CD8-positive, alpha-beta T cell (primary cell): ENCODE measurements at regions of chr20 and their contacts with region 1.

Region 1: GRCh38 chr20:47356526-47357295 is at the start of gene ZMYND8:
- DNase-seq: peak; percentile 90 to 100 (median 95)
- ATAC-seq: peak; percentile 90
- H3K4me3 ChIP-seq: peak within 1 kb of the TSS; percentile 53 to 55
- H3K4me3 Mint-ChIP-seq: peak within 1 kb of the TSS; percentile 82
- H3K27ac ChIP-seq: peak within 1 kb of the TSS; percentile 75 to 76
- H3K27ac Mint-ChIP-seq: peak within 1 kb of the TSS; percentile 100
- H3K4me1 ChIP-seq: peaks cover 70% of the 10 kb centered on the region
- H3K4me1 Mint-ChIP-seq: peaks cover 38% of the 10 kb centered on the region
- H3K27me3 ChIP-seq: no peaks in the 10 kb centered on the region
- H3K27me3 Mint-ChIP-seq: no peaks in the 10 kb centered on the region
- CTCF ChIP-seq: no peak
- total RNA-seq, gene ZMYND8: 23.2 to 27.0 TPM

Region 2: GRCh38 chr20:46689082-46689754 is 667.5 kb before region 1 on chr20 and contains the start of gene TP53RK:
- CTCF ChIA-PET with region 1: no interaction called
- POLR2A ChIA-PET with region 1: no interaction called
- intact Hi-C with region 1: loop called in 1 of 2 experiments (anchors 5 kb)
- DNase-seq: peak; percentile 89 to 99 (median 96)
- ATAC-seq: peak; percentile 96
- H3K4me3 ChIP-seq: peak within 1 kb of the TSS; percentile 92 to 96
- H3K4me3 Mint-ChIP-seq: peak within 1 kb of the TSS; percentile 100
- H3K27ac ChIP-seq: peak within 1 kb of the TSS; percentile 74 to 83
- H3K27ac Mint-ChIP-seq: peak within 1 kb of the TSS; percentile 99
- H3K4me1 ChIP-seq: peaks cover 42% of the 10 kb centered on the region
- H3K4me1 Mint-ChIP-seq: peaks cover 57% of the 10 kb centered on the region
- H3K27me3 ChIP-seq: no peaks in the 10 kb centered on the region
- H3K27me3 Mint-ChIP-seq: no peaks in the 10 kb centered on the region
- CTCF ChIP-seq: no peak
- total RNA-seq, gene TP53RK: 5.4 TPM

Region 3: DNA sequence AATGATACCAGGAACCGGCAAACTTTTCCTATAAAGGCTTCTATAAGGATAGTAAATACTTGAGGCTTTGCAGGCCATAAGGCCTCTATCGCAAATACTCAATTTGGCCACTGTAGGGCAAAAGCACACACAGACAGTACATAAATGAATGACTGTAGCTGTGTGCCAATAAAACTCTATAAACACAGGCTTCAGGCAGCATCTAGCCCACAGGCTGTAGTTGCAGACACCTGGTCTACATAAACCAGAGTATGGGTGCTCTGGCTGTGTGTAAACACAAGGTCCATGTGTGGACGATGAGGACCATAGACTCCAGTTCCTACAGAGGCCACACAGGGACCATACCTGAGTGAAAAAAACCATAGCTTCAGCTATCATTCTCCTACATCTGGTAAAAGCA is 52.4 kb before region 1 on chr20:
- CTCF ChIA-PET with region 1: no interaction called
- POLR2A ChIA-PET with region 1: no interaction called
- intact Hi-C with region 1: no loop called
- DNase-seq: no peak
- ATAC-seq: no peak
- H3K4me3 ChIP-seq: no peak overlapping the region
- H3K4me3 Mint-ChIP-seq: no peak overlapping the region
- H3K27ac ChIP-seq: no peak overlapping the region
- H3K27ac Mint-ChIP-seq: peak overlapping the region; percentile 8
- H3K4me1 ChIP-seq: peaks cover 6% of the 10 kb centered on the region
- H3K4me1 Mint-ChIP-seq: peaks cover 22% of the 10 kb centered on the region
- H3K27me3 ChIP-seq: no peaks in the 10 kb centered on the region
- H3K27me3 Mint-ChIP-seq: no peaks in the 10 kb centered on the region
- CTCF ChIP-seq: no peak

Region 4: GRCh38 chr20:47501483-47502270 is 145.0 kb after region 1 on chr20 and contains the start of gene NCOA3:
- CTCF ChIA-PET with region 1: no interaction called
- POLR2A ChIA-PET with region 1: interaction called, 9 read pairs
- intact Hi-C with region 1: loop called (anchors 2 to 5 kb)
- DNase-seq: peak; percentile 73 to 92 (median 90)
- ATAC-seq: peak; percentile 80
- H3K4me3 ChIP-seq: peak within 1 kb of the TSS; percentile 60 to 91
- H3K4me3 Mint-ChIP-seq: peak within 1 kb of the TSS; percentile 97
- H3K27ac ChIP-seq: peak within 1 kb of the TSS; percentile 49 to 71
- H3K27ac Mint-ChIP-seq: peak within 1 kb of the TSS; percentile 98
- H3K4me1 ChIP-seq: peaks cover 24% of the 10 kb centered on the region
- H3K4me1 Mint-ChIP-seq: peaks cover 37% of the 10 kb centered on the region
- H3K27me3 ChIP-seq: no peaks in the 10 kb centered on the region
- H3K27me3 Mint-ChIP-seq: no peaks in the 10 kb centered on the region
- CTCF ChIP-seq: peak; percentile 34
- total RNA-seq, gene NCOA3: 45.1 to 47.1 TPM

Region 5: GRCh38 chr20:48921151-48921898 is 1564.6 kb after region 1 on chr20 and contains the start of gene ARFGEF2:
- CTCF ChIA-PET with region 1: no interaction called
- POLR2A ChIA-PET with region 1: no interaction called
- intact Hi-C with region 1: loop called in 1 of 2 experiments (anchors 10 kb)
- DNase-seq: peak; percentile 79 to 96 (median 89)
- ATAC-seq: peak; percentile 92
- H3K4me3 ChIP-seq: peak within 1 kb of the TSS; percentile 77 to 99
- H3K4me3 Mint-ChIP-seq: peak within 1 kb of the TSS; percentile 93
- H3K27ac ChIP-seq: peak within 1 kb of the TSS; percentile 93 to 94
- H3K27ac Mint-ChIP-seq: peak within 1 kb of the TSS; percentile 95
- H3K4me1 ChIP-seq: peaks cover 28% of the 10 kb centered on the region
- H3K4me1 Mint-ChIP-seq: peaks cover 49% of the 10 kb centered on the region
- H3K27me3 ChIP-seq: no peaks in the 10 kb centered on the region
- H3K27me3 Mint-ChIP-seq: no peaks in the 10 kb centered on the region
- CTCF ChIP-seq: no peak
- total RNA-seq, gene ARFGEF2: 25.7 to 26.7 TPM

Region 6: GRCh38 chr20:49186535-49187329 is 1830.0 kb after region 1 on chr20:
- CTCF ChIA-PET with region 1: no interaction called
- POLR2A ChIA-PET with region 1: no interaction called
- intact Hi-C with region 1: loop called (anchors 5 to 10 kb)
- DNase-seq: peak; percentile 22 to 84 (median 69)
- ATAC-seq: peak; percentile 41
- H3K4me3 ChIP-seq: peak overlapping the region; percentile 67 to 82
- H3K4me3 Mint-ChIP-seq: peak overlapping the region; percentile 85
- H3K27ac ChIP-seq: peak overlapping the region; percentile 46 to 81
- H3K27ac Mint-ChIP-seq: peak overlapping the region; percentile 77
- H3K4me1 ChIP-seq: peaks cover 41% of the 10 kb centered on the region
- H3K4me1 Mint-ChIP-seq: peaks cover 47% of the 10 kb centered on the region
- H3K27me3 ChIP-seq: peaks cover 0 to 2% of the 10 kb centered on the region in 2 experiments
- H3K27me3 Mint-ChIP-seq: no peaks in the 10 kb centered on the region
- CTCF ChIP-seq: no peak